HepG2 (cell line): ENCODE measurements at regions of chr7 and their contacts with region 1.

Region 1: GRCh38 chr7:100478966-100479665 is at the start of gene TSC22D4:
- DNase-seq: peak; percentile 73
- ATAC-seq: peak; percentile 60
- H3K4me3 ChIP-seq: peak within 1 kb of the TSS; percentile 72 to 96 (median 90)
- H3K27ac ChIP-seq: peak within 1 kb of the TSS; percentile 37
- H3K4me1 ChIP-seq: peaks cover 30% of the 10 kb centered on the region
- H3K27me3 ChIP-seq: peaks cover 0 to 13% of the 10 kb centered on the region in 2 experiments; a peak in 3 of 5 replicates
- CTCF ChIP-seq: no peak
- EP300 ChIP-seq: peak in 1 of 2 experiments; percentile 27; a peak in 1 of 4 replicates
- POLR2A ChIP-seq: peak; percentile 26 to 81; a peak in 3 of 4 replicates
- RAD21 ChIP-seq: no peak; the same call in 1 of the 2 replicates
- total RNA-seq, gene TSC22D4: 6.3 and 7.7 TPM in 2 replicates

Region 2: GRCh38 chr7:101180130-101180755 is 701.1 kb after region 1 on chr7 and contains the start of gene NAT16:
- CTCF ChIA-PET with region 1: no interaction called
- POLR2A ChIA-PET with region 1: no interaction called
- in situ Hi-C with region 1: no loop called
- intact Hi-C with region 1: loop called (anchors 5 kb)
- DNase-seq: no peak
- ATAC-seq: peak; percentile 11; the same call in 2 of the 3 replicates
- H3K4me3 ChIP-seq: peak within 1 kb of the TSS in 2 of 3 experiments; percentile 31 to 56; a peak in 3 of 6 replicates
- H3K27ac ChIP-seq: no peak within 1 kb of the TSS
- H3K4me1 ChIP-seq: peaks cover 51% of the 10 kb centered on the region
- H3K27me3 ChIP-seq: peaks cover 11 to 42% of the 10 kb centered on the region in 2 experiments
- CTCF ChIP-seq: no peak
- EP300 ChIP-seq: no peak
- POLR2A ChIP-seq: no peak
- RAD21 ChIP-seq: no peak
- total RNA-seq, gene NAT16: not detected in 2 replicates